ENCODE measurements at regions of chr11 and their contacts with region 1.

Region 1: DNA sequence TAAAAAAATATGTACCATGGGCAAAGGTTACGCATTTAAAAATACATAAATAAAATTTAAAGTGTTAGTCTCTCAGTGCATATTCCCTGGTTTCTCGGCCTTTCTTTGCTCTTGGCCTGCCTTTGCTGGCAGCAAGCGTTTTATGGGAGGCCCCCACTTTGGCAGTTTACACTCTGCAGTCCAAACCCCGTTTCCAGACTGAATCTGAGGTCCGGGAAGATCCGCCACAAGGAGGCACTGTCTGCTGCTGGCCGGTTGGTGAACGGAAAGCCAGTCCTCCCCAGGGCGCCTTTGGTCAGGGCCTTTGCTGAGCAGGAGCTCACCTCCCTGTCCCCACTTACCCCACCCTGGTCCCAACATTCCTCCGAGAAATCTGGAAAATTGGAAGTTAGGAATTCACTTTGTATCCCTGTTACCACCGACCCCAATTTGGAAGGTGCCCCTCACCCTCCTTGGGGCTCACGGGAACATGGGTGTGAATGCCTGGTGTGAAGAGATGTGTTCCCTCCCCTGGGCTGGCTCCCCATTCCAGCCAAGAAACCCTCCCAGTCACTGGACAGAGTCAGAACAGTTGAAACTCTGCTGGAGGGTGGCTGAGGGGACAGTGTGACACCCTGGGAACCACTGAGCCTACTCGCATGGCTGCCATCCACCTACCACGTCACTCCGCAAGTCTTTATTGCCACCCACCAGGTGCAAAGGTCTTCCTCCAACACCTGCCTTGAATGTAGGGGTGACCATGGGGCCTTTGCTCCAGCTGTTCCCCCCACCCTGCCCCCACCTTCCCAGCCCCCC is 9.4 kb upstream of the SF1 start:
- DNase-seq: peak; percentile 48 to 54
- H3K4me3 ChIP-seq: no peak overlapping the region
- H3K27ac ChIP-seq: no peak overlapping the region
- H3K4me1 ChIP-seq: no peaks in the 10 kb centered on the region
- H3K27me3 ChIP-seq: no peaks in the 10 kb centered on the region
- CTCF ChIP-seq: peak in 5 of 6 experiments; percentile 20 to 61 (median 36)
- POLR2A ChIP-seq: no peak

Region 2: DNA sequence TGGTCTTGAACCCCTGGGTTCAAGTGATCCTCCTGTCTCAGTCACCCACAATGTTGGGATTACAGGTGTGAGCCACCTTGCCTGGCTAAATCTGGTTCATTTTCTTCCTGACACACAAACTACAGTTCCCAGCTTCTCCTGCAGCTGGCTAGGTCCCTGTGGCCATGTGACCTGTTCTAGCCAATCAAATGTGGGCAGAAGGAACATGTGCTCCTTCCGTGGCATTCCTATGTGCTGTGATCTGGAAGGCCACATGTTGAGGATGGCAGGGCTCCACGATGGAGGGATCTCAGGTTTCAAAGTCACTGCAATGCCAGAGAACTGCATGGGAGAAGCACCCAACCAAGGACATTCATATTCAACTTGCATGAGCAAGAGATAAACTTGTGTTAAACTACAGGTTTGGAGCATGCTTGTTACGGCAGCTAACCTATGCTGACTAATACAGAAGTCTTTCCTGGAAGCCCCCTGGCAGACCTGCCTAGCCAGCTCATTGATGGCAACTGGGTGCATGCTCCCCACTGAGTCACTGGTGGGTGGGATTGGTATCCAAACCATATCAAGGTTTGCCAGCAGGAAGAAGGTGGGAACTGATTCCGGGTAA is 342.8 kb before region 1 on chr11:
- intact Hi-C with region 1: no loop called
- DNase-seq: peak in 1 of 2 donors; percentile 7
- H3K4me3 ChIP-seq: no peak overlapping the region
- H3K27ac ChIP-seq: no peak overlapping the region
- H3K4me1 ChIP-seq: peaks cover 11 to 15% of the 10 kb centered on the region in 2 donors
- H3K27me3 ChIP-seq: no peaks in the 10 kb centered on the region
- CTCF ChIP-seq: no peak
- POLR2A ChIP-seq: no peak

Region 3: DNA sequence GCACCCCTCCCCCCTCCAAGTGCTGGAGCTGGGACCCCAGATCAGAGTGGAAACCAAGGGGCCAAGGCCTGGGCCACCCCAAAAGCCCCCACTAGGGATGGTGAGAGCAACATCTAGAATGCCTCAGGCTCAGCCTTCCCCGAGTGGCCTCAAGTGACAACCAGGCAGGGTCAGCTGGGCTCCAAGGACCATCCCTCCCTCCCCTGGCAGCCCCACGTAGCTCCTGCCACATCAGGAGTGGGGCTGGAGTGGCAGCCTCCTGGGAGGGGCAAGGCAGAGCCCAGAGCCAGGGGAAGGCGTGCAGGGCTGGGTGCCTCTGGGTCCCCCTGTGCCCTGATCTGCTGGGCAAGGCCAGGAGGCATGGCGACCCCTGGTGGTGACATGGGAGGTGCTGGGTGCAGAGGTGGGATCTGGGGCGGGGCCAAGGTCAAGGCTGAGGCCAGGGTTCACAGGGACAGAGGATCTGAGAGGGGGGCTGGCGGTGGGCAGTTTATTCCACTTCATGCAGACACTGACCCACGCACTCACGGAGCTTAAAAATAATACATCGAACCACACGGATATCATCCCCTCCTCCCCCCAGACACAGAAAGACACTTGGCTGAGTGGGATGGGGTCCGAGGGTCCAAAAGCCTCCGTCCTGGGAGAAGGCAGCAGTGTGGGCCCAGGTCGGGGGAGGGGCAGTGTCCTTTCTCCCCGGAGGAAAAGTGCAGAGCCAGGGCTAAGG is 106.5 kb after region 1 on chr11:
- intact Hi-C with region 1: loop called (anchors 10 kb)
- DNase-seq: peak; percentile 89
- H3K4me3 ChIP-seq: no peak overlapping the region
- H3K27ac ChIP-seq: no peak overlapping the region
- H3K4me1 ChIP-seq: peaks cover 0 to 3% of the 10 kb centered on the region in 2 donors
- H3K27me3 ChIP-seq: no peaks in the 10 kb centered on the region
- CTCF ChIP-seq: peak; percentile 61 to 91 (median 87)
- POLR2A ChIP-seq: no peak

Measured in thyroid gland (tissue), 4 donors.